ENCODE measurements at regions of chr7 and their contacts with region 1.

Region 1: GRCh38 chr7:143396625-143397556 is 11.8 kb downstream of the EPHA1 start:
- DNase-seq: no peak
- ATAC-seq: peak; percentile 3 to 5; a peak in 2 of 6 replicates
- H3K4me3 ChIP-seq: no peak overlapping the region
- H3K27ac ChIP-seq: no peak overlapping the region
- H3K4me1 ChIP-seq: peaks cover 10% of the 10 kb centered on the region; the same call in 1 of the 3 replicates
- CTCF ChIP-seq: no peak
- EP300 ChIP-seq: no peak
- POLR2A ChIP-seq: no peak
- RAD21 ChIP-seq: no peak

Region 2: DNA sequence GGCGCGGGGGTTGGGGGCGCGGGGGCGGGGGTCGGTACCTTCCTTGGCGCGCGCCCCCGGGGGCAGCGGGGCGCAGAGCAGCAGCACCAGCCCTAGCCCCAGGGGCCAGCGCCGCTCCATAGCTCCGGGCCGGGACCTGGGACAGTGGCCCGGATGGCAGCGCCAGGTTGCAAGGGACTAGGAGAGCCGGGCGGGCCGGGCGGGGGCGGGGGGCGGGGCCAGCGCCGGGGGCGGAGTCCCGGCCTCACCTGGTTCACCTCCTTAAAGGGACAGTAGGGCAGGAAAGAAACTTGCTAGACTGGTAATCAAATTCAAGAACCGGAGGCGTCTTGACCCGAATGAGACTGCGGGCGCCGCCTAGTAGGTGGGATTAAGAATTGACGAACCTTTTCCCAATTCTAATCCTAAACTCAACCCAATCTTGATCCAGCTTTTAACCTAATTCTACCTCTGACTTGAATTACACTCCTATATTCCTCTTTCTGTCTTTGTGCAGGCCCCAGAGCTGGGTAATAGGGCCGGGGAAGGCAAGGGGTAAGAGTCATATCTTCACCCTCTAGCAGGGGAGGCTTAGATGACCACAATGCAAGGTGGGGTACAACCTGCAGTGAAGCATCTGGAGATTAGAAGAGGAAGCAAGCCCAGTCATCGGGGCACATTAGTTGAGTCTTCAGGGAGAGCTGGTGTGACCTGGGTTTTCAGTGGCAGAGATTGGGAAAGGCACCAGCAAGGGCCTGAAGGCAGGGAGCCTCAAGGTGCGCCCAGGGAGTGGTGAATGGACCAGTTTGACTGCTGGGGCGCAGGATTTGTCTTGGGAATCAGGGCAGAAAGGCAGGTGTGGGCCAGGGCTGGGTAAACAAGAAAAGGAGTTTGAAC is 12.0 kb after region 1 on chr7 and contains the start of gene EPHA1:
- CTCF ChIA-PET with region 1: interaction called, 19 read pairs
- POLR2A ChIA-PET with region 1: no interaction called
- DNase-seq: peak in 1 of 2 experiments; percentile 65
- ATAC-seq: peak; percentile 38 to 57; a peak in 5 of 6 replicates
- H3K4me3 ChIP-seq: peak within 1 kb of the TSS; percentile 38
- H3K27ac ChIP-seq: peak within 1 kb of the TSS in 1 of 2 experiments; percentile 36; a peak in 1 of 6 replicates
- H3K4me1 ChIP-seq: peaks cover 7% of the 10 kb centered on the region; the same call in 2 of the 3 replicates
- CTCF ChIP-seq: peak; percentile 37
- EP300 ChIP-seq: no peak
- POLR2A ChIP-seq: no peak
- RAD21 ChIP-seq: peak in 1 of 2 experiments; percentile 35; a peak in 1 of 5 replicates
- polyA plus RNA-seq, gene EPHA1: not detected in 2 replicates

Region 3: GRCh38 chr7:143416565-143417149 is 19.8 kb after region 1 on chr7:
- CTCF ChIA-PET with region 1: interaction called, 26 read pairs
- POLR2A ChIA-PET with region 1: no interaction called
- DNase-seq: peak; percentile 44 to 78
- ATAC-seq: peak in 1 of 2 experiments; percentile 79; a peak in 3 of 6 replicates
- H3K4me3 ChIP-seq: no peak overlapping the region
- H3K27ac ChIP-seq: no peak overlapping the region
- H3K4me1 ChIP-seq: peaks cover 5% of the 10 kb centered on the region; the same call in 1 of the 3 replicates
- CTCF ChIP-seq: peak; percentile 81
- EP300 ChIP-seq: no peak
- POLR2A ChIP-seq: no peak
- RAD21 ChIP-seq: peak; percentile 79 to 80

Region 4: GRCh38 chr7:143504937-143505297 is 108.0 kb after region 1 on chr7:
- CTCF ChIA-PET with region 1: no interaction called
- POLR2A ChIA-PET with region 1: no interaction called
- DNase-seq: no peak
- ATAC-seq: no peak
- H3K4me3 ChIP-seq: no peak overlapping the region
- H3K27ac ChIP-seq: no peak overlapping the region
- H3K4me1 ChIP-seq: no peaks in the 10 kb centered on the region
- CTCF ChIP-seq: no peak
- EP300 ChIP-seq: no peak
- POLR2A ChIP-seq: no peak
- RAD21 ChIP-seq: no peak

Measured in A549 (cell line).